ENCODE measurements at regions of chr11 and their contacts with region 1.

Region 1: GRCh38 chr11:47514825-47515647 is 37.9 kb downstream of the CELF1 start:
- DNase-seq: peak; percentile 69
- ATAC-seq: peak; percentile 95
- H3K4me3 Mint-ChIP-seq: peak overlapping the region; percentile 0
- H3K27ac Mint-ChIP-seq: peak overlapping the region; percentile 84
- H3K4me1 Mint-ChIP-seq: peaks cover 89% of the 10 kb centered on the region
- H3K27me3 Mint-ChIP-seq: no peaks in the 10 kb centered on the region

Region 2: GRCh38 chr11:47477323-47477722 is 37.7 kb before region 1 on chr11:
- CTCF ChIA-PET with region 1: no interaction called
- POLR2A ChIA-PET with region 1: interaction called, 4 read pairs
- intact Hi-C with region 1: loop called in 1 of 2 experiments (anchors 1 kb)
- DNase-seq: peak; percentile 46
- ATAC-seq: peak; percentile 95
- H3K4me3 Mint-ChIP-seq: no peak overlapping the region
- H3K27ac Mint-ChIP-seq: peak overlapping the region; percentile 82
- H3K4me1 Mint-ChIP-seq: peaks cover 16% of the 10 kb centered on the region
- H3K27me3 Mint-ChIP-seq: no peaks in the 10 kb centered on the region

Measured in activated CD4-positive, alpha-beta T cell treated with anti-CD3 and anti-CD28 coated beads for 36 hours (primary cell).